Caco-2 (cell line): ENCODE measurements at regions of chr2 and their contacts with region 1.

Region 1: DNA sequence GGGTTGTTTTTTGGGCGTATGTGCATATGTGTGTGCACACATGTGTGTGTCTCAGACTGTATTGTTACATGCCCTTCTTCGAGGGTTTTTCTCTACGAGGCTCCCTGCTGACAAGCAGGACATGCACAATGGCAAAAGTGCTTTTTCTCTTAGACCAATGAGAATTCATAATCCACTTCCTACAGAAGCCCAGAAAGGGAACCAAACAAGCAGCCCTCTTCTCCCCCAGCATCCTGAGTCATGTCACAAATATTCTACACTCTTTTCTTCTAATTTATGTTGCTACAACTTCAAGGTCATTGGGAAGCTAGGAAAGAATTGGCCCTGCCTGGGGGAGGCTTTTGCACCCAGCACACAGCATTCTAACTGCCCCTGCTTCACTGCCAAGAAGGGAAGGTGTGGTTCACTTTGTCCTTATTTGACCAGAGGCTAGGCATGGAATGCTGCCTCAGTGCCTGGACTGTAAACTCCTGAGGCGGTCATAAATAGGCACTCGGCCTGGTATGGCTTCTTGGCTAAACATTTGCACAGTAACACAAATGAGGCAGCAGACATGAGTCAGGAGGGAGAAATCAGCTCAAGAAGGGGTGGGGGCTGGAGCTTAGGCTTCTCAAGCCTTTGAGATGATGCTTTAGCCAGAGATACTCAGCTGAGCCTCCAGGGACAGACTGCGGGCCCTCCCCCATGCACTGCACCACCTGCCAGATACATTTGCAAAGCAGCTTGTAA is 92.7 kb upstream of the KLF7 start:
- DNase-seq: peak; percentile 52 to 70
- H3K4me3 ChIP-seq: no peak overlapping the region
- H3K4me3 Mint-ChIP-seq: no peak overlapping the region
- H3K27ac Mint-ChIP-seq: peak overlapping the region; percentile 67
- H3K4me1 ChIP-seq: peaks cover 19% of the 10 kb centered on the region
- H3K4me1 Mint-ChIP-seq: peaks cover 17% of the 10 kb centered on the region
- H3K27me3 ChIP-seq: no peaks in the 10 kb centered on the region
- H3K27me3 Mint-ChIP-seq: peaks cover 2% of the 10 kb centered on the region
- CTCF ChIP-seq: no peak

Region 2: GRCh38 chr2:207341804-207342203 is 83.4 kb after region 1 on chr2:
- CTCF ChIA-PET with region 1: no interaction called
- POLR2A ChIA-PET with region 1: no interaction called
- intact Hi-C with region 1: loop called (anchors 5 kb)
- DNase-seq: peak in 1 of 2 experiments; percentile 26
- H3K4me3 ChIP-seq: no peak overlapping the region
- H3K4me3 Mint-ChIP-seq: no peak overlapping the region
- H3K27ac Mint-ChIP-seq: no peak overlapping the region
- H3K4me1 ChIP-seq: no peaks in the 10 kb centered on the region
- H3K4me1 Mint-ChIP-seq: no peaks in the 10 kb centered on the region
- H3K27me3 ChIP-seq: no peaks in the 10 kb centered on the region; the same call in 1 of the 2 replicates
- H3K27me3 Mint-ChIP-seq: no peaks in the 10 kb centered on the region
- CTCF ChIP-seq: no peak

Region 3: DNA sequence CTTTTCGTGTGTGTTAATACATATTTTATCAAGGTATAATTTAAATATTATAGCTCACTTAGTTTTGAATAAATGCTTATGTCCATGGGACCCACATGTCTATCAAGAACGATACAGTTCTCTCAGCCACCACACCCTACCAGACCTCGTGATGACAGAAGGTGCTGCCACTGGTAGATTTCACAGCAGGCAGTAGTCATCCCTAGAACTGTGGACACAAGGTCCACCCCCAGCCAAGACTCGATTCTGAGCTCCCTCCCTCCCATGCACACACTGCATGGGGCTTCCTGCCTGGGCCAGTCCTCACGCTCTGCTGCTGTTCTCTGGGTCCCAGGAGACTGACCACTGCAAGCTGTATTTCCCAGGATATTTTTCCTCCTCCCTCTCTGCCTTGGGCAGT is 244.8 kb after region 1 on chr2:
- CTCF ChIA-PET with region 1: no interaction called
- POLR2A ChIA-PET with region 1: no interaction called
- intact Hi-C with region 1: no loop called
- DNase-seq: no peak
- H3K4me3 ChIP-seq: no peak overlapping the region
- H3K4me3 Mint-ChIP-seq: no peak overlapping the region
- H3K27ac Mint-ChIP-seq: no peak overlapping the region
- H3K4me1 ChIP-seq: peaks cover 5% of the 10 kb centered on the region; the same call in 1 of the 2 replicates
- H3K4me1 Mint-ChIP-seq: peaks cover 6% of the 10 kb centered on the region
- H3K27me3 ChIP-seq: no peaks in the 10 kb centered on the region
- H3K27me3 Mint-ChIP-seq: no peaks in the 10 kb centered on the region
- CTCF ChIP-seq: no peak

Region 4: GRCh38 chr2:207792244-207792785 is 533.9 kb after region 1 on chr2:
- CTCF ChIA-PET with region 1: no interaction called
- POLR2A ChIA-PET with region 1: no interaction called
- intact Hi-C with region 1: no loop called
- DNase-seq: peak; percentile 54 to 62
- H3K4me3 ChIP-seq: no peak overlapping the region
- H3K4me3 Mint-ChIP-seq: peak overlapping the region; percentile 34
- H3K27ac Mint-ChIP-seq: peak overlapping the region; percentile 93
- H3K4me1 ChIP-seq: peaks cover 44% of the 10 kb centered on the region
- H3K4me1 Mint-ChIP-seq: peaks cover 27% of the 10 kb centered on the region
- H3K27me3 ChIP-seq: no peaks in the 10 kb centered on the region
- H3K27me3 Mint-ChIP-seq: no peaks in the 10 kb centered on the region
- CTCF ChIP-seq: no peak